ENCODE measurements at regions of chr11 and their contacts with region 1.

Region 1: DNA sequence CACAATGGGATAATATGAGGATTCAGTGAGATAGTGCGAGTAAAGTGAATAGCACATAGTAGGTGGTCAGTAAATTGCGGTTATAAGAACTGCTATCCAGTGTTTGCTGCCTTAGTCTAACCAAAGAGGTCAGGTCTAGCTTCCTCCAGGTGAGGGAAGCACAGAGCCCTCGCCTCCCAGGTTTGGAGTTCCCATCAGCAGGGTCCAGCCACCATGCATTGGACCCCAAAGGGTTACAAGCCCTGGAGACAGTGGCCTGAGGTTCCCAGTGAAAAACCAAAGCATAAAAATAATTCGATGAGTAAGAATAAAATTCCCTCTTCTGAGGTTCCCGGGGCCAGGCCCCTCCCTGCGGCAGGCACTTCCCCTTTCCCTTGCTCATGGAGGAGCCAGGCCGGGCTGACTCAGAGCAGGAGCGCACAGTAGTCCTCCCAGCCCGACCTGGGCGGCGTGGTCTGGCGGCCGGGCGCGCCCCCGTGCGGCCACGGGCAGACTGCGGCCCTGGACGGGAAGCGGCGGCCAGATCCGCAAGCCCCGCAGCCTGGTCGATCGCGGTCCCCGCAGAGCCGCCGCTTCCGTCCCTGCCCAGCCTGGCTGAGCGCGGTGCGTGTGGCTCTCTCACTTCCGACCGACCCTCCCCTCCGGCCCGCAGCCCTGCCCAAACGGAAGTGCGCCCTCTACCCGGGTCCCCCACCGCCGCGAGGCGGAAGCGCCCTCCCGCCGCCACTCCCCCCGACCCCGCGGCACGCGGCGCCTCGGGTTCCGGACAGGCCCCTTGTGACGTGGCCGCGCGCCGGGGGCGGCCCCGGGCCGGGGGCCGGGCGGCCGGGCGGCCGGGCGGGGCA is at the start of gene SLC39A13:
- DNase-seq: peak; percentile 98
- H3K4me3 Mint-ChIP-seq: peak within 1 kb of the TSS; percentile 97
- H3K27ac Mint-ChIP-seq: peak within 1 kb of the TSS; percentile 97
- H3K4me1 Mint-ChIP-seq: peaks cover 19% of the 10 kb centered on the region
- H3K27me3 Mint-ChIP-seq: no peaks in the 10 kb centered on the region
- total RNA-seq, gene SLC39A13: 13.2 and 13.3 TPM in 2 replicates

Region 2: GRCh38 chr11:47296045-47296444 is 111.9 kb before region 1 on chr11:
- intact Hi-C with region 1: no loop called
- DNase-seq: no peak
- H3K4me3 Mint-ChIP-seq: no peak overlapping the region
- H3K27ac Mint-ChIP-seq: no peak overlapping the region
- H3K4me1 Mint-ChIP-seq: peaks cover 4% of the 10 kb centered on the region
- H3K27me3 Mint-ChIP-seq: no peaks in the 10 kb centered on the region

Region 3: GRCh38 chr11:47426061-47426956 is 18.3 kb after region 1 on chr11 and contains the start of gene PSMC3:
- intact Hi-C with region 1: loop called (anchors 1 kb)
- DNase-seq: peak; percentile 100
- H3K4me3 Mint-ChIP-seq: peak within 1 kb of the TSS; percentile 100
- H3K27ac Mint-ChIP-seq: peak within 1 kb of the TSS; percentile 99
- H3K4me1 Mint-ChIP-seq: peaks cover 19% of the 10 kb centered on the region
- H3K27me3 Mint-ChIP-seq: no peaks in the 10 kb centered on the region
- total RNA-seq, gene PSMC3: 230 and 234 TPM in 2 replicates

Region 4: GRCh38 chr11:47688111-47688510 is 280.1 kb after region 1 on chr11:
- intact Hi-C with region 1: no loop called
- DNase-seq: no peak
- H3K4me3 Mint-ChIP-seq: no peak overlapping the region
- H3K27ac Mint-ChIP-seq: no peak overlapping the region
- H3K4me1 Mint-ChIP-seq: peaks cover 4% of the 10 kb centered on the region
- H3K27me3 Mint-ChIP-seq: no peaks in the 10 kb centered on the region